ENCODE measurements at regions of chr14 and their contacts with region 1.

Region 1: GRCh38 chr14:50099335-50099734 is 17.0 kb downstream of the VCPKMT start:
- DNase-seq: no peak
- H3K4me3 ChIP-seq: no peak overlapping the region
- H3K27ac ChIP-seq: no peak overlapping the region
- H3K4me1 ChIP-seq: peaks cover 0 to 4% of the 10 kb centered on the region in 2 experiments; a peak in 1 of 4 replicates
- H3K27me3 ChIP-seq: no peaks in the 10 kb centered on the region
- CTCF ChIP-seq: no peak
- EP300 ChIP-seq: peak in 1 of 2 experiments; percentile 20; a peak in 1 of 4 replicates
- RAD21 ChIP-seq: no peak

Region 2: DNA sequence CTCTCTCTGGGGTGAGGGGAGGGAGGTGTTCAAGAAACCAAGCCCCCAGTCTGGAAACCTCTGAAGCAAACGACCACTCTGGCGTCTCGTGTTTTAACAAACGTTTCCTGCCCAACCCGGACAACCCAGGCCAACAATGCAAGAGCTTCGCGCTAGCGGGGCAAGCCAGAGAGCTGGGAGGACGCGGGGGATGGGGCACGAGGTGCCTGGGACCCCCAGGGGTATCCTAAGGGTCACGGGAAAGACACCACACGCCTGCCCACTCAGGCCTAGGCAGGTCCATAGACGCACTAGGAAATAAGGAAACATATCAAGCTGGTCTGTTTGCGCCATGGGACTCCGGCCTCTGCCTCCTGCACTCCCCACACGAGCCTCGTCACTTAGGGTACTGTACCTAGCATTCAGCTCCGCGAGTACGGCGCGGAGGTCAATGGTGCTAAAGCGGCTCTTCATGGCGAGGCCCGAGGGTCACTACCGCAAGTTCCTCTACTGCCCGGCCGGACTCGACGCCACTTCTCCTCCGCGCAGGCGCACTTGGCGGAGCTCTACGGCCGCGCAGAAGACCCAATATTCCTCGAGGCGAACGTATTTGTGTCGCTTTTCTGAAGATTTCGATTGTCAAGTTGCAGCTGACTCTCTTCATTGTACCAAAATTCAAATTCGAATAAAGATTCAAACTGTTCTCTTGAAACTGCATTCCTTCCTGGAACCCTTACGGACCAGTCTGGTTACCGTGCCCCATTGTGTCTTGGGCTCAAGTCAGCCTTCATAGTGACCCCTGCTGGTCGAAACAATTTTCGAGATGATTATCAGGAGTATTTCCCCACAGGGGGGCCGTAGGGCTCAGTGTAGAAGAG is 246.8 kb before region 1 on chr14 and contains the start of gene NEMF:
- CTCF ChIA-PET with region 1: interaction called, 17 read pairs
- POLR2A ChIA-PET with region 1: no interaction called
- DNase-seq: peak; percentile 84
- H3K4me3 ChIP-seq: peak within 1 kb of the TSS; percentile 85 to 87
- H3K27ac ChIP-seq: peak within 1 kb of the TSS; percentile 80 to 87
- H3K4me1 ChIP-seq: peaks cover 0 to 3% of the 10 kb centered on the region in 2 experiments; a peak in 3 of 4 replicates
- H3K27me3 ChIP-seq: no peaks in the 10 kb centered on the region
- CTCF ChIP-seq: peak; percentile 96
- EP300 ChIP-seq: no peak
- RAD21 ChIP-seq: no peak
- polyA plus RNA-seq, gene NEMF: 14.0 and 15.4 TPM in 2 replicates

Region 3: DNA sequence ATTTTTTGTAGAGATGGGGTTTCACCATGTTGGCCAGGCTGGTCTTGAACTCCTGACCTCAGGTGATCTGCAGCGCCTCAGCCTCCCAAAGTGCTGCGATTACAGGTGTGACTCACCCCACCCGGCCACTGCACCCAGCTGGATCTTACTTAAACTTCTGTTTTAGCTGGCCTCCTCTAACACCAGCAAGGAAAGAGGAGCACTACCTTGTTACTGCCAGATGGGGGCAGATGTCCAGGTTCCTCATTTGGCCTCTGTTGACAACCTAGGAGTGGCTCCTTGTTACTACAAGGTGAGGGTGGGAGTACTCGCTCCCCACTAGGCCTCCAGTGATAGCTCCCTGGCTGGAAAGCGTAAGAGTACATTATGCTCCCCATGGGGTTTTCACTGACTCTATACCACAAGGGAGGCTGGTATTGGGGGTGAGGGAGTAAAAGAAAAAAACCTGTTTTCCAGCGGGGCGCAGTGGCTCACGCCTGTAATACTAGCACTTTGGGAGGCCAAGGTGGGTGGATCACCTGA is 219.6 kb before region 1 on chr14:
- CTCF ChIA-PET with region 1: interaction called, 49 read pairs
- POLR2A ChIA-PET with region 1: no interaction called
- DNase-seq: peak; percentile 65
- H3K4me3 ChIP-seq: no peak overlapping the region
- H3K27ac ChIP-seq: no peak overlapping the region
- H3K4me1 ChIP-seq: no peaks in the 10 kb centered on the region
- H3K27me3 ChIP-seq: no peaks in the 10 kb centered on the region
- CTCF ChIP-seq: peak; percentile 69
- EP300 ChIP-seq: no peak
- RAD21 ChIP-seq: peak; percentile 70

Region 4: DNA sequence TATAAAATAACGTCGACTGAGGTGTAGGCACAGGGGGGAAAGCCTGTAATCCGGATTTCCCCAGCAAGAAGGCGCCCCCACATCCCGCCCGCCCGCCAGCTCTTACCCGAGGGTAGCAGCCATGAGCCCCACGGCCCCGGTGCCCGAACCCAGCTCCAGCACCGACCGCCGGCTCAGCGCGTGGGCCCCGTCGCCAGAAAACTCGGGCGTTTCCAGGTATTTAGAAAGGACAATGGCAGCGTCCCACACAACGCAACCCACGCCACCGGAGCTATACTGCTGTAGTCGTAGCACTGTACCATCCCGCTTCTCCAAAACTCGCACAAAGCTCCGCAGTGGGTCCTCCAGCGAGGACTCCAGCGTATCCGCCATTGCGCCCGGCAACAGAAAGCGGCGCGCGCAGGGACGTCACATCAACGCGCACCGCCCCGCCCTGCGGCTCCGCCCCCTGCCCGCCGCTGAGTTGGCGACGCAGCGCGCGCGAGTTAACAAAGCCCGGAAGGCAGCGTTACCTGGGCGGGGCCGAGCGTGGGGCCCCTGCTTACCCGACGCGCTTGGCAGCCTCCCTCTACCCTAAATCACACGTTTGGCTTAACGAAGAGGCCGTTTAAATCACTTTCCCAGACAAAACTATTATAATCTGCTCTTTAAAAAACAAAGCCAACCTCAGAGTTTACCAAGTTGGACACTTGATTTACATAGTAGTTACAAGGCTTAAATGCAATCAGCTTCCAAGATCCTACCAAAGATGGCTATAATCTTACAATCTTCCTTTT is 17.0 kb after region 1 on chr14 and contains the start of gene VCPKMT:
- CTCF ChIA-PET with region 1: interaction called, 17 read pairs
- POLR2A ChIA-PET with region 1: no interaction called
- DNase-seq: peak; percentile 95
- H3K4me3 ChIP-seq: peak within 1 kb of the TSS; percentile 86 to 87
- H3K27ac ChIP-seq: peak within 1 kb of the TSS; percentile 88 to 92
- H3K4me1 ChIP-seq: peaks cover 8% of the 10 kb centered on the region in 2 experiments
- H3K27me3 ChIP-seq: no peaks in the 10 kb centered on the region
- CTCF ChIP-seq: no peak
- EP300 ChIP-seq: 0 out of 4 replicates have a peak, but pooled peaks of 1 of the 2 experiments have one; percentile 21
- RAD21 ChIP-seq: no peak
- polyA plus RNA-seq, gene VCPKMT: 6.7 and 7.3 TPM in 2 replicates